Ovary (tissue), 10 donors: ENCODE measurements at regions of chr17 and their contacts with region 1.

Region 1: DNA sequence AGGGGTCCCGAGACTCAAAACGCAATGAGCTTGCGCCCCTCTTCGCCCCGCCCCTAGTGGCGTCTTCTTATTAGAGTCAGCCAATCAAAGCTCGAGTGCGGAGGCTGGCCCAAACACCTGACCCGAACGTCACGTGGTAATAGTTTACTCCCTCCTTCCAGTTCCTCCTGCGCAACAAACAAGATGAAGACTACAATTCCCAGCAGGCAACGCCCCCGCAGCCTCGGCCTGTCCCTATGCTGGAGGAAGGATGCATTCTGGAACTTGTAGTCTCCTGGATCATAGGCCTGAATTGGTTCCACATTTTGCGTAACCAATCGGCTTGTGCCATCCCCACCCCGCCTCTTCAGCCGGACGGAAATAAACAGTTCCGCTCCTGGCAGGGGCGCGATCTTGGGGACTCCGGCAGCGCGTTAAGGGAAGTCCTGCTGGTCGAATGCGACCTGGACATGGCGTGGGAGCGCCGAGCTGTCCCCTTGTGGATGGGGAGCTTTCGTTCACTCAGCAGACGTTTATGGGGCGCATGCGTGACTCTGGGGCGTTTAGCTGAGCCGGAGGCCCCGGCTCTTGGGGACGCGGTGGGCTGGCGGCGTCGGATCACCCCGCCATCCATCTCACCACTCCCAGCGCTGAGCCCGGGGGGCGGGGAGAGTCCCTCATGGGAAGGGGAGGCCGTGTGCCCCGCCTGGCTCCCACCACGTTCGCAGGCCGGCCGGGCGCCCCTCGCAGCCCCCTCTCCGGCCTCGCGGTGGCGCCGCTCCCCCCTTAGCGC is at the start of gene WBP2:
- DNase-seq: peak; percentile 97 to 99 (median 98)
- H3K4me3 ChIP-seq: peak within 1 kb of the TSS; percentile 74
- H3K27ac ChIP-seq: peak within 1 kb of the TSS; percentile 96 to 97
- H3K4me1 ChIP-seq: peaks cover 2% of the 10 kb centered on the region
- H3K27me3 ChIP-seq: no peaks in the 10 kb centered on the region
- CTCF ChIP-seq: peak; percentile 60 to 84 (median 74)
- EP300 ChIP-seq: peak; percentile 93
- POLR2A ChIP-seq: peak; percentile 94
- total RNA-seq, gene WBP2: 48.5 to 131 (median 92.7) TPM

Region 2: DNA sequence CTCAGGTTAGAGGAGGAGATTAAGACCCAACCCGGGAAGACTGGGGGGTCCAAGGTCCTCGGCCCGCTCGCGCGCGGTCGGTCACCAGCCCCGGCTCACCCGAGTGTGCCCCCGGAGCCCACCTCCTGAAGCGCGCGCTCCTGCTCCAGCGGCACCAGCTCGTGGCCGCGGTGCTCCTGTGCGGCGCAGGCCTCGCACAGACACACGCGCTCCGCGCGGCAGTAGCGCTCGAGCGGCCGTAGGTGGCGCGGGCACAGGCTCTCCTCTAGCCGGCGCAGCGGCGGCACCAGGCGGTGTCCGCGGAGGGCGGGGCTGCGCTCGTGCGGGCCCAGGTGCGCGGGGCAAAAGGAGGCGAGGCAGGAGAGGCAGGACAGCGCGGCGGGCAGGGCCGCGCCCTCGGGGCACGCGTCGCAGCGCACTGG is 22.3 kb after region 1 on chr17:
- intact Hi-C with region 1: loop called in 1 of 4 experiments (anchors 2 kb)
- DNase-seq: peak; percentile 63 to 83 (median 76)
- H3K4me3 ChIP-seq: peak overlapping the region; percentile 48
- H3K27ac ChIP-seq: peak overlapping the region; percentile 83 to 87
- H3K4me1 ChIP-seq: peaks cover 19% of the 10 kb centered on the region
- H3K27me3 ChIP-seq: no peaks in the 10 kb centered on the region
- CTCF ChIP-seq: peak; percentile 43 to 76 (median 67)
- EP300 ChIP-seq: no peak
- POLR2A ChIP-seq: peak; percentile 13

Region 3: GRCh38 chr17:75896415-75897159 is 41.1 kb after region 1 on chr17 and contains the start of gene TRIM65:
- intact Hi-C with region 1: loop called in 1 of 4 experiments (anchors 5 kb)
- DNase-seq: peak; percentile 85 to 90 (median 88)
- H3K4me3 ChIP-seq: peak within 1 kb of the TSS; percentile 63
- H3K27ac ChIP-seq: peak within 1 kb of the TSS; percentile 85 to 95
- H3K4me1 ChIP-seq: peaks cover 8% of the 10 kb centered on the region
- H3K27me3 ChIP-seq: no peaks in the 10 kb centered on the region
- CTCF ChIP-seq: peak in 2 of 3 donors; percentile 51 to 78
- EP300 ChIP-seq: no peak
- POLR2A ChIP-seq: peak; percentile 68
- total RNA-seq, gene TRIM65: 17.3 to 28.0 (median 24.3) TPM